GM12878 (cell line): ENCODE measurements at regions of chr6 and their contacts with region 1.

Region 1: GRCh38 chr6:91575032-91575431 is 988.2 kb upstream of the MAP3K7 start:
- DNase-seq: peak; percentile 17
- ATAC-seq: peak; percentile 87
- H3K4me3 ChIP-seq: no peak overlapping the region
- H3K27ac ChIP-seq: no peak overlapping the region
- H3K4me1 ChIP-seq: no peaks in the 10 kb centered on the region
- H3K27me3 ChIP-seq: no peaks in the 10 kb centered on the region
- CTCF ChIP-seq: no peak; a peak in 1 of 6 replicates
- EP300 ChIP-seq: peak in 1 of 2 experiments; percentile 49; a peak in 1 of 4 replicates
- POLR2A ChIP-seq: no peak
- RAD21 ChIP-seq: no peak

Region 2: GRCh38 chr6:91198588-91199255 is 376.3 kb before region 1 on chr6:
- CTCF ChIA-PET with region 1: no interaction called
- POLR2A ChIA-PET with region 1: no interaction called
- RAD21 ChIA-PET with region 1: no interaction called
- SMC1A ChIA-PET with region 1: no interaction called
- in situ Hi-C with region 1: no loop called
- intact Hi-C with region 1: no loop called
- DNase-seq: no peak
- ATAC-seq: no peak; the same call in 2 of the 3 replicates
- H3K4me3 ChIP-seq: no peak overlapping the region
- H3K27ac ChIP-seq: no peak overlapping the region
- H3K4me1 ChIP-seq: no peaks in the 10 kb centered on the region
- H3K27me3 ChIP-seq: no peaks in the 10 kb centered on the region
- CTCF ChIP-seq: no peak
- EP300 ChIP-seq: no peak
- POLR2A ChIP-seq: no peak
- RAD21 ChIP-seq: no peak

Region 3: DNA sequence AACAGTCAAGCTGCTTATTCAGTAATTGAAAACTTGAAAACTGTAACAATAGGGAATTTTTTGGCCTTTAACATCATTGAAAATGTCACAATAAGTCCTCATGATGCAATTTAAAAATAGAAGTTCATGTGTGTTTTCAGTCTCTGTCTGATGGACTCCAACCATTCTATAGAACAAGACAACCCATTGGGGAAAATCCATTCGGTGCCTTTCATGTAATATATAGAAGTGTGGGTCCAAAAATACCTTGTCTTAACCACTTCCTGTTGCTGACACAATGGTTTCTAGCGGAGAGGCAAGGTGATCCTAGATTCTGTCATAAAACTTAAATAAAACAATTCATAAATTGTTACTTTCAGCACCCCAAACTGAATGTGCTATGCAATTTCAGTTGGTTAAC is 143.2 kb after region 1 on chr6:
- CTCF ChIA-PET with region 1: no interaction called
- POLR2A ChIA-PET with region 1: interaction called, 3 read pairs
- RAD21 ChIA-PET with region 1: no interaction called
- SMC1A ChIA-PET with region 1: no interaction called
- in situ Hi-C with region 1: no loop called
- intact Hi-C with region 1: loop called (anchors 5 kb)
- DNase-seq: no peak
- ATAC-seq: peak; percentile 83
- H3K4me3 ChIP-seq: no peak overlapping the region
- H3K27ac ChIP-seq: no peak overlapping the region
- H3K4me1 ChIP-seq: no peaks in the 10 kb centered on the region
- H3K27me3 ChIP-seq: no peaks in the 10 kb centered on the region
- CTCF ChIP-seq: no peak
- EP300 ChIP-seq: peak; percentile 51 to 52; a peak in 2 of 4 replicates
- POLR2A ChIP-seq: no peak
- RAD21 ChIP-seq: no peak

Region 4: DNA sequence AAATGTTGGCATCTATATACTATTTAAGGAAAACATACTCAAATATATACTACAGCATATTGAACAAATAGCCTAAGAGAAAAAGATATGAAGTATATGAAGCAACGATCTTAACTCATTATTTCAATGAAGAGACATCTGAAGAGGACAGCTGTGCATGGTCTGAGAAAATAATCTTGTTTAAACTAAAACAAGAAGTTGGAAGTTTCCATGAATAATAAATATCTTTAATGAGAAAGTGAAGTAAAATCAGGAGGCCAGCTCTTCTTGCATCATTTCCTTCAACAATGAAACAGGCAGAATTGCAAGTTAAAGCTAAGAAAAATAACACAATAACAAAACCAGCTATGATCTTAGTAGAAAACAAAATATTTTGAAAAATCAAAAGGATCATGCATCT is 277.2 kb after region 1 on chr6:
- CTCF ChIA-PET with region 1: no interaction called
- POLR2A ChIA-PET with region 1: no interaction called
- RAD21 ChIA-PET with region 1: no interaction called
- SMC1A ChIA-PET with region 1: no interaction called
- in situ Hi-C with region 1: no loop called
- intact Hi-C with region 1: loop called (anchors 10 kb)
- DNase-seq: no peak
- ATAC-seq: no peak; the same call in 2 of the 3 replicates
- H3K4me3 ChIP-seq: no peak overlapping the region
- H3K27ac ChIP-seq: no peak overlapping the region
- H3K4me1 ChIP-seq: no peaks in the 10 kb centered on the region
- H3K27me3 ChIP-seq: no peaks in the 10 kb centered on the region
- CTCF ChIP-seq: no peak
- EP300 ChIP-seq: no peak
- POLR2A ChIP-seq: no peak
- RAD21 ChIP-seq: no peak